SK-N-SH (cell line): ENCODE measurements at regions of chr19 and their contacts with region 1.

Region 1: GRCh38 chr19:10644260-10645007 is 9.7 kb upstream of the ILF3 start:
- DNase-seq: peak; percentile 93
- H3K4me3 ChIP-seq: no peak overlapping the region; a peak in 1 of 4 replicates
- H3K27ac ChIP-seq: peak overlapping the region; percentile 26 to 51; a peak in 3 of 4 replicates
- H3K4me1 ChIP-seq: peaks cover 10 to 14% of the 10 kb centered on the region in 2 experiments; a peak in 3 of 4 replicates
- H3K27me3 ChIP-seq: no peaks in the 10 kb centered on the region
- CTCF ChIP-seq: peak; percentile 93
- EP300 ChIP-seq: no peak
- RAD21 ChIP-seq: peak; percentile 85

Region 2: DNA sequence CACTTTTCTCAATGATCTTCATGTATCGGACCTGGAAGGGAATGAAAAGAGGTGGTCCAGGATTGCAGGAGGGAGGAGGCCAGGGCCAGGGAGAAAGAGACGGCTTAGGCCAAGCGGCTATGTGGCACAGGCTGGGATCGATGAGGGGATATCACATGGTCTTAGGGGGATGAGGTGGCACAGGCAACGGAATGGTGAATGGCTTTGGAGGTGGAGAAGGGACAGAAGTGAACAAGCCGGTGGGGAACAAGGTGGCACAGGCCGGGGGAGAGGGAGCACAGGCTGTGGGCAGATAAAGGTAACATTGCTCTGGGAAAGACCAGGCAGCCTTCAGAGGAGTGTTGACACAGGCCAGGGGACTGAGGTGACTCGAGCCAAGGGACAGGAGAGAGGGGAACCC is 70.0 kb before region 1 on chr19:
- CTCF ChIA-PET with region 1: interaction called, 330 read pairs
- POLR2A ChIA-PET with region 1: no interaction called
- DNase-seq: no peak
- H3K4me3 ChIP-seq: no peak overlapping the region
- H3K27ac ChIP-seq: no peak overlapping the region
- H3K4me1 ChIP-seq: peaks cover 0 to 6% of the 10 kb centered on the region in 2 experiments; a peak in 1 of 4 replicates
- H3K27me3 ChIP-seq: no peaks in the 10 kb centered on the region
- CTCF ChIP-seq: no peak
- EP300 ChIP-seq: no peak
- RAD21 ChIP-seq: no peak

Region 3: DNA sequence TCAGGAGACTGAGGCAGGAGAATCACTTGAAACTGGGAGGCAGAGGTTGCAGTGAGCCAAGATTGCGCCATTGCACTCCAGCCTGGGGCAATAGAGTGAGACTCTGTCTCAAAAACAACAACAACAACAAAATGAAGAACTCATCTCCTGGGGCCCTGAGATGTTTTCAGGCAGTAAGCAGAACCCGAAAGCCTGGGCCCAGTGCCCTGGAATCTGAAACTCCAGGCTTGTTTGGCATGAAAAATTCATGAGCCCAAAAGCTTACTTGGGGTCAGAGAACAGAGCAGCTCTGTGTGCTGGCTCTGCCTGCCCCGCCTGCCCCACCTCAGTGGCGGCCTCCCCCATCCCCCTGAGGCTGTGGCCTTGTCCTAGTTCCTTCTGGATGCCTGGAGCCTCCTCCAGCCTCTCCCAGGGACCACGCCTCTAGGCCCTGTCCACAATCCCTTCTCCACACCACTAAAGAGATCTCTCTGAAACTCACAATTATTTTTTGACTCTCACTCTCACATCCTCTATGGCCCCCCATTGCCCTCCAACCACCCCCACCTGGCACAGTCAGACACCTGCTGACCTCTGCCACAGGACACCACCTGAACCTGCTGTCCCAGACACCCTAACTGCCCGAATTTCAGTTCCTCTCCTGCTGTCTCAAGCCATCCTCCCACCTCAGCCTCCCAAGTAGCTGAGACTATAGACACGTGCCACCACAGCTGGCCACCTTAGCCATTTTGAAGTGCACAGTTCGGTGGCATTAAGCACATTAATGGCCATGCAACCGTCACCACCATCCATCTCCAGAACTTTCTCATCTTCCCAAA is 50.4 kb before region 1 on chr19:
- CTCF ChIA-PET with region 1: interaction called, 25 read pairs
- POLR2A ChIA-PET with region 1: no interaction called
- DNase-seq: no peak
- H3K4me3 ChIP-seq: no peak overlapping the region
- H3K27ac ChIP-seq: no peak overlapping the region
- H3K4me1 ChIP-seq: no peaks in the 10 kb centered on the region
- H3K27me3 ChIP-seq: no peaks in the 10 kb centered on the region; the same call in 1 of the 2 replicates
- CTCF ChIP-seq: no peak
- EP300 ChIP-seq: no peak
- RAD21 ChIP-seq: no peak

Region 4: DNA sequence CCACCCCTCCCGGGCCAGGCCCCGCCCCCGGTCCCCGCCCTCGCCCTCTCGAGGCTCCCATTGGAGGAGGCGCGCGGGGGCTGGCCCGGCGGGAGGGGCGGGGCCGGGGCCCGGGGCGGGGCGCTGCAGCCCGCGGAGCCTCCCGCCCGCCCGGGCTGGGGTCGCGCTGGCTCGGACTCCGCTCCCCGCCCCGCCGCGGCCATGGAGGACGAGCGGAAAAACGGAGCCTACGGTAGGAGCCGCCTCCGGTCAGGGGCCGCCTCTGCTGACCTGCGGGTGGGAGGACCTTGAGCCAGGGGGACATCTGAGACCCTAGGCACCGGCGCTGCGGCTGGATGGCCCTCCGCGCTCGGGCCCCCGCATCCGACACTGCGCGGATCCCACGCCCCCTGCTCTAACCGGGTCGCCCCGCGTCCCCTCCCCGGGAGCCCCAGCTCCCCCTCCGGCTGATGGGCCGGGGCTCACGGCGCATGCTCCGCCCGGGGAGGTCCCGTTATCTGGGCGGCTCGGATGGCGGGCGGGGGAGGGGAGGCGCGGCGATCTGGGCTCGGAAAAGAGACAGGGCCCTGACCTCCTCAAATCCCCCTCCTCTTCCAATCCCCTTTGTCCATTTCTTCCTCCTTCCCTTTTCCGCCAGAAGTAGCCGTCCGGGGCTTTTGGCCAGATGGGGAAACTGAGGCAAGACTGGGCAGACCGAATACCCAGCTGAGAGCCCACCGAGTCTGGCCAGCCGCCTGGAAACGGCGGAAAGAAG is 41.9 kb before region 1 on chr19:
- CTCF ChIA-PET with region 1: interaction called, 15 read pairs
- POLR2A ChIA-PET with region 1: interaction called, 4 read pairs
- DNase-seq: peak; percentile 100
- H3K4me3 ChIP-seq: peak overlapping the region; percentile 69 to 95
- H3K27ac ChIP-seq: peak overlapping the region; percentile 54 to 83; a peak in 3 of 4 replicates
- H3K4me1 ChIP-seq: peaks cover 0 to 8% of the 10 kb centered on the region in 2 experiments; a peak in 1 of 4 replicates
- H3K27me3 ChIP-seq: peaks cover 15% of the 10 kb centered on the region; the same call in 1 of the 2 replicates
- CTCF ChIP-seq: no peak
- EP300 ChIP-seq: no peak
- RAD21 ChIP-seq: no peak

Region 5: DNA sequence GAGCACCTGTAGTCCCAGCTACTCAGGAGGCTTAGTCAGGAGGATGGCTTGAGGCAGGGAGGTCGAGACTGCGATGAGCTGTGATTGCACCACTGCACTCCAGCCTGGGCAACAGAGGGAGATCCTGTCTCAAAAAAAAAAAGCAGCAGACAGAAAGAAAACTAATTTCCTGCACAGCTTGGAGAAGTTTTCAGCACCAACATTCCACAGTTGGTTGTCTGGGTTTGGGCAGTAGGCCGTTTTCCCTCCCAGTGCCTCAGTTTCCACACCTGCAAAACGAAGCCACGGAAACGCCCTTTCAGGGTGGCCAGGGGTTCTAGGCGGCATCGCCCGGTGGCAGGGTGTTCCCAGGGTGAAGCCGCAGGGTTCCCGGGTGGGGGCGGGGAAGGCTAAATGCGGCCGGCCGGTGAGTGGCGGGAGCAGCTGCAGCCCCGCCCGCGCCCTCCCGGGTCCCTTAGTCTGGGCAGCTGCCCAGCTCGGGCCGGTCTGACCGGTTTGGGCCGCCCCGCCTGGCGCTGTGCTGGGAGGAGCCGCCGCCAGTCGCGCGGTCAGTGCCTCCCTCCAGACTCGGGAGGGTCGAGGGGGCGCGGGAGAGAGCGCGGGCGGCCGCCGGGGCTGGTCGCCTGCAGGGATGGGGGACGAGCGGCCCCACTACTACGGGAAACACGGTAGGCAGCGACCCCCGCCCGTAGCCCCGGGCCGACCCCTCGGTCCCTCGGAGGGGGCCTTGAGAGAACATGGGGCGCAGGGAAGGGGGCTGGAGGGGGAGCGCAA is 19.2 kb before region 1 on chr19 and contains the start of gene SLC44A2:
- CTCF ChIA-PET with region 1: interaction called, 21 read pairs
- POLR2A ChIA-PET with region 1: interaction called, 3 read pairs
- DNase-seq: peak; percentile 93
- H3K4me3 ChIP-seq: peak within 1 kb of the TSS; percentile 48 to 77
- H3K27ac ChIP-seq: peak within 1 kb of the TSS in 1 of 2 experiments; percentile 22; a peak in 1 of 4 replicates
- H3K4me1 ChIP-seq: peaks cover 0 to 3% of the 10 kb centered on the region in 2 experiments; a peak in 1 of 4 replicates
- H3K27me3 ChIP-seq: no peaks in the 10 kb centered on the region
- CTCF ChIP-seq: no peak
- EP300 ChIP-seq: peak in 1 of 2 experiments; percentile 30; a peak in 1 of 4 replicates
- RAD21 ChIP-seq: no peak
- polyA plus RNA-seq, gene SLC44A2: 61.4 and 66.6 TPM in 2 replicates

Region 6: GRCh38 chr19:10695401-10696398 is 51.3 kb after region 1 on chr19:
- CTCF ChIA-PET with region 1: interaction called, 26 read pairs
- POLR2A ChIA-PET with region 1: no interaction called
- DNase-seq: peak; percentile 95
- H3K4me3 ChIP-seq: peak overlapping the region; percentile 22 to 63
- H3K27ac ChIP-seq: no peak overlapping the region
- H3K4me1 ChIP-seq: peaks cover 0 to 10% of the 10 kb centered on the region in 2 experiments; a peak in 1 of 4 replicates
- H3K27me3 ChIP-seq: no peaks in the 10 kb centered on the region
- CTCF ChIP-seq: no peak
- EP300 ChIP-seq: no peak
- RAD21 ChIP-seq: no peak